Activated CD4-positive, alpha-beta T cell treated with anti-CD3 and anti-CD28 coated beads for 36 hours (primary cell): ENCODE measurements at regions of chr10 and their contacts with region 1.

Region 1: DNA sequence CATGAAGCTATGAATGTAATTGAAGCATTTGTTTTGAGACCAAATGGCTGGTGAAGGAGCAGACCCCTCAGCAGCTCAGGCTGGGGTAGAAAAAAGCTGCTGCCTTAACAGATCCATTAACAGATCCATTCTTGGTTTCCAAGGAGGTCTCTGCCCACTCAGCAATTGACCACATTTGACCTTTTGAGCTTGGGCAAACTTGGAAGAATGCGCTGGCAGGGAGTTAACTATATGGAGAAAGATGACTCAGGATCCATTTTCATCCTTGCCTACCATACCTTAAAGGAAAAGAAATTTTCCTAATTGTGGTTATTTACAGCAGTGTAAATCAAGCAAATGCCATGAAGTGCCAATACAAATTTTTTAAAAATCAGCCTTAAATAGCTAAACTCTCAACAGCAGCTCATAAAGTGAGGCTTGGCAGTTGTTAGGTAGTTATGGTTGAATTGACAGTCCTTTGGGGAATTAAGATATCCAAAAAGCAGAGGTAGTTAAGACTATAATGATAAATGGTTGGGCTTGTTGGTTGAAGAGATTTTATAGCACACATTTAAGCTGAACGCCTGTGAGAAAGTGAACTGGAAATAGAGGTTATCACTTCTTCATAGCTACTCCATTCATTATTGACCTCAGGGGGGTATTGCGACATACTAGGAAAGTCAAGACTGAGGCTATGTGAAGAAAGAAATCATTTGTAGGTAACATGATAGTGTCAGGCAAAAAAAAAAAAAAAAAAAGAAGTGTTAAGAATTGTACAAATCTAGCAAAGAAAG is 83.9 kb downstream of the MKX start:
- DNase-seq: no peak
- ATAC-seq: no peak
- H3K4me3 Mint-ChIP-seq: no peak overlapping the region
- H3K27ac Mint-ChIP-seq: no peak overlapping the region
- H3K4me1 Mint-ChIP-seq: no peaks in the 10 kb centered on the region
- H3K27me3 Mint-ChIP-seq: peaks cover 25% of the 10 kb centered on the region

Region 2: GRCh38 chr10:27369880-27370279 is 291.8 kb before region 1 on chr10:
- CTCF ChIA-PET with region 1: no interaction called
- POLR2A ChIA-PET with region 1: no interaction called
- intact Hi-C with region 1: loop called (anchors 2 to 5 kb)
- DNase-seq: no peak
- ATAC-seq: no peak
- H3K4me3 Mint-ChIP-seq: no peak overlapping the region
- H3K27ac Mint-ChIP-seq: no peak overlapping the region
- H3K4me1 Mint-ChIP-seq: peaks cover 11% of the 10 kb centered on the region
- H3K27me3 Mint-ChIP-seq: peaks cover 2% of the 10 kb centered on the region

Region 3: GRCh38 chr10:27446091-27446918 is 215.4 kb before region 1 on chr10:
- CTCF ChIA-PET with region 1: interaction called, 5 read pairs
- POLR2A ChIA-PET with region 1: no interaction called
- intact Hi-C with region 1: loop called (anchors 1 kb)
- DNase-seq: no peak
- ATAC-seq: no peak
- H3K4me3 Mint-ChIP-seq: no peak overlapping the region
- H3K27ac Mint-ChIP-seq: no peak overlapping the region
- H3K4me1 Mint-ChIP-seq: peaks cover 4% of the 10 kb centered on the region
- H3K27me3 Mint-ChIP-seq: no peaks in the 10 kb centered on the region

Region 4: DNA sequence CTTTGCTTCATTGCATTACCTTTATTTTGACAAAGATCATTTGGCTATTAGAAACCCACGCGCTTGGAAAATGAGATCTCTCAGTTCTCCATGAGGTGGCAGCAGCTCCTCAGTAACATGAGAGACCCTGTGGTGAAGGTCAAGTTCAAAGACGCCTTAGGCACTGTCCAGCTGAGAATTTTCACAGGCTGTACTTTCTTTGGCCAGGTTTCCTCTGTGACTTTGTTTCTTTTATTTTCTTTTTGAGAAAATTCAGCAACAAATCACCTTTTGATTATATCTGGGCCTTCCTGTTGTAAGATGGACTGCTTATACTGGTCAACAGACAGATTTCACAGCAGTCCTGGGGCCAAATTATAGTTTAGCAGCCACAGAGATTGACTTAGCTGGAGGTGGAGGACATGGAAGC is 103.1 kb before region 1 on chr10:
- CTCF ChIA-PET with region 1: interaction called, 4 read pairs
- POLR2A ChIA-PET with region 1: no interaction called
- intact Hi-C with region 1: loop called (anchors 1 to 2 kb)
- DNase-seq: peak; percentile 50
- ATAC-seq: peak; percentile 30
- H3K4me3 Mint-ChIP-seq: no peak overlapping the region
- H3K27ac Mint-ChIP-seq: no peak overlapping the region
- H3K4me1 Mint-ChIP-seq: no peaks in the 10 kb centered on the region
- H3K27me3 Mint-ChIP-seq: no peaks in the 10 kb centered on the region

Region 5: DNA sequence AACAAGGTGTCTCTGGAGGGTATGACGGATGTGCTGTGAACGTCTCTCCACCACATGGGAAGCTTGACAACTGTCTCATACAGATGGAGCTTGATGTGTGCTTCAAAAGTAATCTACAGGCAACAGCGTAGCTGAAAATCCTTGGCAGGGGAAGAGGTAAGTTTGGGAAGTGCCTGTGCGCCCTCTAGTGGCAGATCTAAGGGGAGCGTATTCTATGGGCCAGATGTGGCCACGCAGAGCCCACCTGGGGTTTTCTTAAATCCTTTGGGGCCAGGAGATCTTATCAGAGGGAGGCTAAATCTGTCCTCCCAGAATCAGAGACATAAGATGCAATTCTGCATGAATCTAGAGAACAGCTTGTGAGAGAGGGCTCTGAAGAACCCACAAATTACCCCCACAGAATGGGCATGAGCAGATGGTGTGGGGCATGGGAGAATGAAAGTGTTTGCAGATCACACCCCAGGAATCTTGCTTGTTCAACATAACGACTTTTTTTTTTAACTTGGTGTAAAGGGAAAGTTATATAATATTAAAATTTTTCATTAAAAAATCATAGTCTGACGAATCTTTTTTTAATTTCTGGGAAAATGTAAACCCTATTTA is 732.4 kb after region 1 on chr10:
- CTCF ChIA-PET with region 1: no interaction called
- POLR2A ChIA-PET with region 1: no interaction called
- intact Hi-C with region 1: loop called in 1 of 2 experiments (anchors 5 kb)
- DNase-seq: peak; percentile 82
- ATAC-seq: peak; percentile 87
- H3K4me3 Mint-ChIP-seq: no peak overlapping the region
- H3K27ac Mint-ChIP-seq: no peak overlapping the region
- H3K4me1 Mint-ChIP-seq: peaks cover 4% of the 10 kb centered on the region
- H3K27me3 Mint-ChIP-seq: peaks cover 4% of the 10 kb centered on the region